ENCODE measurements at regions of chr11 and their contacts with region 1.

Region 1: GRCh38 chr11:125358254-125358840 is 137.7 kb downstream of the FEZ1 start:
- H3K4me3 Mint-ChIP-seq: no peak overlapping the region
- H3K27ac Mint-ChIP-seq: no peak overlapping the region
- H3K4me1 Mint-ChIP-seq: no peaks in the 10 kb centered on the region
- H3K27me3 Mint-ChIP-seq: peaks cover 6% of the 10 kb centered on the region

Region 2: GRCh38 chr11:125164422-125165110 is 193.8 kb before region 1 on chr11 and contains the start of gene PKNOX2:
- intact Hi-C with region 1: loop called (anchors 10 kb)
- H3K4me3 Mint-ChIP-seq: peak within 1 kb of the TSS; percentile 94
- H3K27ac Mint-ChIP-seq: peak within 1 kb of the TSS; percentile 52
- H3K4me1 Mint-ChIP-seq: peaks cover 24% of the 10 kb centered on the region
- H3K27me3 Mint-ChIP-seq: peaks cover 86% of the 10 kb centered on the region

Region 3: GRCh38 chr11:125376117-125376516 is 17.8 kb after region 1 on chr11:
- intact Hi-C with region 1: no loop called
- H3K4me3 Mint-ChIP-seq: no peak overlapping the region
- H3K27ac Mint-ChIP-seq: no peak overlapping the region
- H3K4me1 Mint-ChIP-seq: no peaks in the 10 kb centered on the region
- H3K27me3 Mint-ChIP-seq: peaks cover 43% of the 10 kb centered on the region